Activated naive CD4-positive, alpha-beta T cell treated with anti-CD3 and anti-CD28 coated beads, Interleukin-2, amount 10 ng/mL, durations not matched to agents 7 days and 5 days (primary cell): ENCODE measurements at regions of chr5 and their contacts with region 1.

Region 1: GRCh38 chr5:113663880-113664541 is 150.5 kb downstream of the YTHDC2 start:
- DNase-seq: peak; percentile 50
- H3K4me3 Mint-ChIP-seq: no peak overlapping the region
- H3K27ac Mint-ChIP-seq: no peak overlapping the region
- H3K4me1 Mint-ChIP-seq: no peaks in the 10 kb centered on the region
- H3K27me3 Mint-ChIP-seq: peaks cover 5% of the 10 kb centered on the region

Region 2: GRCh38 chr5:113612060-113612496 is 51.9 kb before region 1 on chr5:
- CTCF ChIA-PET with region 1: interaction called, 31 read pairs
- DNase-seq: no peak
- H3K4me3 Mint-ChIP-seq: no peak overlapping the region
- H3K27ac Mint-ChIP-seq: no peak overlapping the region
- H3K4me1 Mint-ChIP-seq: peaks cover 12% of the 10 kb centered on the region
- H3K27me3 Mint-ChIP-seq: peaks cover 10% of the 10 kb centered on the region